Breast epithelium (tissue), 4 donors: ENCODE measurements at regions of chr16 and their contacts with region 1.

Region 1: GRCh38 chr16:67279296-67280089 is at the start of gene PLEKHG4:
- DNase-seq: peak; percentile 61 to 78
- H3K4me3 ChIP-seq: peak within 1 kb of the TSS; percentile 57 to 76 (median 76)
- H3K27ac ChIP-seq: peak within 1 kb of the TSS; percentile 89 to 91
- H3K4me1 ChIP-seq: peaks cover 7 to 8% of the 10 kb centered on the region in 2 donors
- H3K27me3 ChIP-seq: no peaks in the 10 kb centered on the region
- CTCF ChIP-seq: peak; percentile 9 to 92 (median 34)
- POLR2A ChIP-seq: no peak
- total RNA-seq, gene PLEKHG4: 15.0 to 26.2 (median 19.8) TPM

Region 2: GRCh38 chr16:66899945-66900710 is 379.4 kb before region 1 on chr16:
- intact Hi-C with region 1: loop called (anchors 5 kb)
- DNase-seq: peak in 1 of 2 donors; percentile 28
- H3K4me3 ChIP-seq: no peak overlapping the region
- H3K27ac ChIP-seq: peak overlapping the region; percentile 68 to 84
- H3K4me1 ChIP-seq: no peaks in the 10 kb centered on the region
- H3K27me3 ChIP-seq: no peaks in the 10 kb centered on the region
- CTCF ChIP-seq: no peak
- POLR2A ChIP-seq: no peak

Region 3: GRCh38 chr16:67326472-67327309 is 47.2 kb after region 1 on chr16 and contains the starts of genes KCTD19 and LRRC36:
- intact Hi-C with region 1: no loop called
- DNase-seq: peak in 1 of 2 donors; percentile 79
- H3K4me3 ChIP-seq: peak within 1 kb of the TSS; percentile 45 to 82 (median 55)
- H3K27ac ChIP-seq: peak within 1 kb of the TSS in 1 of 2 donors; percentile 44
- H3K4me1 ChIP-seq: no peaks in the 10 kb centered on the region
- H3K27me3 ChIP-seq: no peaks in the 10 kb centered on the region
- CTCF ChIP-seq: peak in 2 of 3 donors; percentile 17 to 26
- POLR2A ChIP-seq: no peak
- total RNA-seq, gene KCTD19: 1.0 TPM in 1 of 3 donors, not detected in the others
- total RNA-seq, gene LRRC36: 0.16 to 3.3 (median 0.59) TPM

Region 4: GRCh38 chr16:68520649-68521086 is 1241.2 kb after region 1 on chr16:
- intact Hi-C with region 1: no loop called
- DNase-seq: peak; percentile 83 to 90
- H3K4me3 ChIP-seq: peak overlapping the region in 2 of 3 donors; percentile 45 to 61
- H3K27ac ChIP-seq: no peak overlapping the region
- H3K4me1 ChIP-seq: no peaks in the 10 kb centered on the region
- H3K27me3 ChIP-seq: no peaks in the 10 kb centered on the region
- CTCF ChIP-seq: peak; percentile 97 to 99 (median 98)
- POLR2A ChIP-seq: no peak